ENCODE measurements at regions of chr7 and their contacts with region 1.

Region 1: DNA sequence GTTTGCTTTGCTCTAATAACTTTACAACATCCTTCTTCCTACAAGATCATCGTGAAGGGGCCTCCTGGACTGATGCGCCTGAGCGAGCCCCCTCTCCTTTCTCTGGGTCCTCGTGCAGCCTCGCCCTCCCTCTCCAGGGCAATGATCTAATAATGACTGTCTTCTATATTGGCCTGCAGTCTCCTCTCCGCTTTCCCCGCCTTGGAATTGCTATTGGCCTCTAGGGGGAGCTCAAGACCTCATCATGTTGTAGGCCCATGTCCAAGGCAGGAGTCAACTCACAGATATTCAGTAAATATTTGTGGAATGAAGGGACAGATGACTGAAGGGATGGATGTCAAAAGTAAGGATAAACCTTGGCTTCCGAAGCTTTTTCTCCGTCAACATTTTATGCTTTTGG is 1180.3 kb downstream of the TYW1 start:
- DNase-seq: peak; percentile 87
- H3K4me3 ChIP-seq: no peak overlapping the region
- H3K27ac ChIP-seq: no peak overlapping the region
- H3K4me1 ChIP-seq: no peaks in the 10 kb centered on the region
- H3K27me3 ChIP-seq: no peaks in the 10 kb centered on the region
- CTCF ChIP-seq: peak; percentile 85

Region 2: GRCh38 chr7:66664650-66665293 is 1512.2 kb before region 1 on chr7:
- CTCF ChIA-PET with region 1: no interaction called
- POLR2A ChIA-PET with region 1: no interaction called
- intact Hi-C with region 1: no loop called
- DNase-seq: no peak
- H3K4me3 ChIP-seq: no peak overlapping the region
- H3K27ac ChIP-seq: no peak overlapping the region
- H3K4me1 ChIP-seq: no peaks in the 10 kb centered on the region
- H3K27me3 ChIP-seq: no peaks in the 10 kb centered on the region
- CTCF ChIP-seq: no peak

Region 3: GRCh38 chr7:67788669-67789068 is 388.3 kb before region 1 on chr7:
- CTCF ChIA-PET with region 1: no interaction called
- POLR2A ChIA-PET with region 1: no interaction called
- intact Hi-C with region 1: loop called (anchors 10 kb)
- DNase-seq: peak; percentile 49
- H3K4me3 ChIP-seq: no peak overlapping the region
- H3K27ac ChIP-seq: no peak overlapping the region
- H3K4me1 ChIP-seq: no peaks in the 10 kb centered on the region
- H3K27me3 ChIP-seq: no peaks in the 10 kb centered on the region
- CTCF ChIP-seq: peak; percentile 73

Region 4: GRCh38 chr7:67928141-67928540 is 248.8 kb before region 1 on chr7:
- CTCF ChIA-PET with region 1: no interaction called
- POLR2A ChIA-PET with region 1: no interaction called
- intact Hi-C with region 1: no loop called
- DNase-seq: no peak
- H3K4me3 ChIP-seq: no peak overlapping the region
- H3K27ac ChIP-seq: no peak overlapping the region
- H3K4me1 ChIP-seq: peaks cover 9% of the 10 kb centered on the region
- H3K27me3 ChIP-seq: no peaks in the 10 kb centered on the region
- CTCF ChIP-seq: no peak

Region 5: GRCh38 chr7:68417002-68417401 is 240.0 kb after region 1 on chr7:
- CTCF ChIA-PET with region 1: interaction called, 10 read pairs
- POLR2A ChIA-PET with region 1: interaction called, 4 read pairs
- intact Hi-C with region 1: no loop called
- DNase-seq: no peak
- H3K4me3 ChIP-seq: no peak overlapping the region
- H3K27ac ChIP-seq: no peak overlapping the region
- H3K4me1 ChIP-seq: peaks cover 4% of the 10 kb centered on the region
- H3K27me3 ChIP-seq: no peaks in the 10 kb centered on the region
- CTCF ChIP-seq: no peak

Region 6: DNA sequence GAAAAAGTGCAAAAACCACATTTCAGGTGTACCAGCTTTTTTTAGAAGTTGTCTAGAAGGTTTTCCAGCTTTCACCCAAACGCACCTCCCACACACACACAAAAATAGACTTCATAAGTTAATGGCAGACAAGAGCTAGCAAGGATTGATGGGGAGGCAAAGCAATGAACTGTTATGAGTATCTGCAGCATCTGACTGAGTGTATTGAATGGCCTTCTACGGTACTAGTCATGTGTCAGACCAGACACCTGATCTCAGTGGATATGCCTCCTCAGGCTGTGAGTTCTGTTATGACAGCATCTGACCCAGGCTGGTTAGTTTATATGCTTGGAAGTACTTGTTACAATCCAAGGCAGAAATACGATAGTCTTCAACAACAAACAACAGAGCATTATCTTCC is 1015.2 kb after region 1 on chr7:
- CTCF ChIA-PET with region 1: no interaction called
- POLR2A ChIA-PET with region 1: no interaction called
- intact Hi-C with region 1: loop called (anchors 10 kb)
- DNase-seq: no peak
- H3K4me3 ChIP-seq: no peak overlapping the region
- H3K27ac ChIP-seq: no peak overlapping the region
- H3K4me1 ChIP-seq: no peaks in the 10 kb centered on the region
- H3K27me3 ChIP-seq: no peaks in the 10 kb centered on the region
- CTCF ChIP-seq: no peak